OCI-LY7 (cell line): ENCODE measurements at regions of chr3 and their contacts with region 1.

Region 1: DNA sequence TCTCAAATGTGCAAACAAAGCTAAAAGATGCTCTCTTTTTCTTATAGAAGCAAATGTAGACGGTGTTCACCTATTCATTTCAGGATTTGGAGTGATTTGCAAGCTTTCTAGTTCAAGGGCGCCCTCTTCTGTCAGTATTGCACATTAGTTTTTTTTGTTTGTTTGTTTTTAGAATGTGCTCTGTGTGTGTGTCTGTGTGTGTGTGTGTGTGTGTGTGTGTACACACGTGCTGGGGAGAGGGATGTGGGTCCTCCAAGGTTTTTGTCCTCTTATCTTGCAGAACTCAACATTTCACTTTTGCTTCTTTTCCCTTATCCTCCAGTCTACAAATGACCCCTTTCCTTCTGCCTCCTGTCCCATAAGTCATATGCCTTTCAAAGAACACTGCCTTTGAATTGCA is 23.5 kb downstream of the DNAH1 start:
- DNase-seq: peak; percentile 84
- H3K4me3 ChIP-seq: no peak overlapping the region
- H3K27ac ChIP-seq: no peak overlapping the region
- H3K4me1 ChIP-seq: peaks cover 18% of the 10 kb centered on the region
- CTCF ChIP-seq: peak; percentile 93

Region 2: GRCh38 chr3:52001443-52001974 is 338.1 kb before region 1 on chr3:
- CTCF ChIA-PET with region 1: no interaction called
- POLR2A ChIA-PET with region 1: no interaction called
- intact Hi-C with region 1: loop called (anchors 2 kb)
- DNase-seq: peak; percentile 90
- H3K4me3 ChIP-seq: no peak overlapping the region
- H3K27ac ChIP-seq: no peak overlapping the region
- H3K4me1 ChIP-seq: peaks cover 15% of the 10 kb centered on the region
- CTCF ChIP-seq: peak; percentile 99

Region 3: GRCh38 chr3:52154117-52155094 is 185.2 kb before region 1 on chr3 and contains the start of gene POC1A:
- CTCF ChIA-PET with region 1: no interaction called
- POLR2A ChIA-PET with region 1: interaction called, 3 read pairs
- intact Hi-C with region 1: loop called (anchors 5 kb)
- DNase-seq: peak; percentile 94
- H3K4me3 ChIP-seq: peak within 1 kb of the TSS; percentile 93
- H3K27ac ChIP-seq: peak within 1 kb of the TSS; percentile 64
- H3K4me1 ChIP-seq: peaks cover 9% of the 10 kb centered on the region
- CTCF ChIP-seq: no peak
- total RNA-seq, gene POC1A: 34.5 and 40.0 TPM in 2 replicates

Region 4: GRCh38 chr3:52231502-52232293 is 107.9 kb before region 1 on chr3:
- CTCF ChIA-PET with region 1: interaction called, 3 read pairs
- POLR2A ChIA-PET with region 1: interaction called, 4 read pairs
- intact Hi-C with region 1: loop called (anchors 2 kb)
- DNase-seq: peak; percentile 80
- H3K4me3 ChIP-seq: no peak overlapping the region
- H3K27ac ChIP-seq: no peak overlapping the region
- H3K4me1 ChIP-seq: peaks cover 11% of the 10 kb centered on the region
- CTCF ChIP-seq: peak; percentile 92

Region 5: GRCh38 chr3:52291508-52292181 is 48.0 kb before region 1 on chr3:
- CTCF ChIA-PET with region 1: interaction called, 8 read pairs
- POLR2A ChIA-PET with region 1: interaction called, 6 read pairs
- intact Hi-C with region 1: loop called (anchors 1 kb)
- DNase-seq: peak; percentile 71
- H3K4me3 ChIP-seq: no peak overlapping the region
- H3K27ac ChIP-seq: no peak overlapping the region
- H3K4me1 ChIP-seq: peaks cover 18% of the 10 kb centered on the region
- CTCF ChIP-seq: peak; percentile 89

Region 6: GRCh38 chr3:52372822-52373504 is 33.4 kb after region 1 on chr3:
- CTCF ChIA-PET with region 1: no interaction called
- POLR2A ChIA-PET with region 1: interaction called, 3 read pairs
- intact Hi-C with region 1: loop called (anchors 5 kb)
- DNase-seq: peak; percentile 84
- H3K4me3 ChIP-seq: peak overlapping the region; percentile 49
- H3K27ac ChIP-seq: peak overlapping the region; percentile 39
- H3K4me1 ChIP-seq: peaks cover 33% of the 10 kb centered on the region
- CTCF ChIP-seq: peak; percentile 60